ENCODE measurements at regions of chr16 and their contacts with region 1.

Region 1: DNA sequence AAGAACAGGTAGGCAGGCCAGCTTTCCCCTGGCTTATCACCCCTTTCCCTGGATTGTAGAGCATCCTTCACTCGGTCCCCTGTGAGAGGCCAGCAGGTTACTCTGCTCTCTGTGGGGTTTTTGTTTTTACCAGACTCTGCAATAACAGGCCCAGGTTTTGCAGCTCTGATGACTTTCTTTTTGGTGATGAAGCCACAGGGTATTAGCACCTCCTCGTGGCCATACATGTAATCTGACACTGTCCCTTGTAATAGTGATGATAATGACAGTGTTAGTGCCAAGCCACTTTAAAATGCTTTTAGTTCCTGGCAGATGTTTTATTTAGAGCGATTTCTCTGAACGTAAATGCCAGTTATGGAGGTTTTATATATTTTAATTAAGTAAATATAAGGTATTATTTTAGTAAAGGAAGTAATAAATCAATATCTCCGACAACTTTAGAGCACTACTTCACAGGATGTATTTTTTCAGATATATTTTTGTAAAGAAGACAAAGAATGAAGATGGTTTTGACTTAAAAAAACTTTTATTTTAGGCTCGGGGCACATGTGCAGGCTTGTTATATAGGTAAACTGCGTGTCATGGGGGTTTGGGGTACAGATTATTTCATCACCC is 38.0 kb upstream of the CPHXL start:
- DNase-seq: no peak
- ATAC-seq: peak; percentile 90
- H3K4me3 ChIP-seq: no peak overlapping the region
- H3K27ac ChIP-seq: no peak overlapping the region
- H3K4me1 ChIP-seq: no peaks in the 10 kb centered on the region
- H3K27me3 ChIP-seq: no peaks in the 10 kb centered on the region

Region 2: GRCh38 chr16:75198135-75198600 is 566.1 kb before region 1 on chr16:
- intact Hi-C with region 1: loop called (anchors 5 to 10 kb)
- DNase-seq: peak in 1 of 2 donors; percentile 59
- ATAC-seq: no peak
- H3K4me3 ChIP-seq: no peak overlapping the region
- H3K27ac ChIP-seq: no peak overlapping the region
- H3K4me1 ChIP-seq: no peaks in the 10 kb centered on the region
- H3K27me3 ChIP-seq: no peaks in the 10 kb centered on the region

Region 3: GRCh38 chr16:75471723-75472633 is 292.3 kb before region 1 on chr16:
- intact Hi-C with region 1: loop called (anchors 2 kb)
- DNase-seq: peak in 1 of 2 donors; percentile 54
- ATAC-seq: peak; percentile 93
- H3K4me3 ChIP-seq: no peak overlapping the region
- H3K27ac ChIP-seq: no peak overlapping the region
- H3K4me1 ChIP-seq: no peaks in the 10 kb centered on the region
- H3K27me3 ChIP-seq: no peaks in the 10 kb centered on the region

Region 4: GRCh38 chr16:75647492-75648264 is 116.6 kb before region 1 on chr16 and contains the starts of genes KARS1 and TERF2IP:
- intact Hi-C with region 1: loop called in 1 of 2 experiments (anchors 2 kb)
- DNase-seq: peak; percentile 96 to 97
- ATAC-seq: peak; percentile 97
- H3K4me3 ChIP-seq: peak within 1 kb of the TSS; percentile 93 to 100
- H3K27ac ChIP-seq: peak within 1 kb of the TSS; percentile 70 to 97
- H3K4me1 ChIP-seq: peaks cover 3 to 5% of the 10 kb centered on the region in 2 donors
- H3K27me3 ChIP-seq: no peaks in the 10 kb centered on the region
- total RNA-seq, gene KARS1: 60.4 to 69.8 TPM
- total RNA-seq, gene TERF2IP: 59.5 to 66.3 TPM

Region 5: GRCh38 chr16:75660726-75661302 is 103.4 kb before region 1 on chr16:
- intact Hi-C with region 1: loop called in 1 of 2 experiments (anchors 5 kb)
- DNase-seq: no peak
- ATAC-seq: no peak
- H3K4me3 ChIP-seq: no peak overlapping the region
- H3K27ac ChIP-seq: no peak overlapping the region
- H3K4me1 ChIP-seq: no peaks in the 10 kb centered on the region
- H3K27me3 ChIP-seq: no peaks in the 10 kb centered on the region